HCT116 (cell line): ENCODE measurements at regions of chr4 and their contacts with region 1.

Region 1: GRCh38 chr4:161949946-161950725 is 213.7 kb downstream of the FSTL5 start:
- DNase-seq: no peak
- ATAC-seq: no peak
- H3K4me3 ChIP-seq: no peak overlapping the region
- H3K27ac ChIP-seq: no peak overlapping the region
- H3K4me1 ChIP-seq: no peaks in the 10 kb centered on the region
- H3K27me3 ChIP-seq: no peaks in the 10 kb centered on the region
- CTCF ChIP-seq: no peak
- POLR2A ChIP-seq: no peak
- RAD21 ChIP-seq: no peak

Region 2: DNA sequence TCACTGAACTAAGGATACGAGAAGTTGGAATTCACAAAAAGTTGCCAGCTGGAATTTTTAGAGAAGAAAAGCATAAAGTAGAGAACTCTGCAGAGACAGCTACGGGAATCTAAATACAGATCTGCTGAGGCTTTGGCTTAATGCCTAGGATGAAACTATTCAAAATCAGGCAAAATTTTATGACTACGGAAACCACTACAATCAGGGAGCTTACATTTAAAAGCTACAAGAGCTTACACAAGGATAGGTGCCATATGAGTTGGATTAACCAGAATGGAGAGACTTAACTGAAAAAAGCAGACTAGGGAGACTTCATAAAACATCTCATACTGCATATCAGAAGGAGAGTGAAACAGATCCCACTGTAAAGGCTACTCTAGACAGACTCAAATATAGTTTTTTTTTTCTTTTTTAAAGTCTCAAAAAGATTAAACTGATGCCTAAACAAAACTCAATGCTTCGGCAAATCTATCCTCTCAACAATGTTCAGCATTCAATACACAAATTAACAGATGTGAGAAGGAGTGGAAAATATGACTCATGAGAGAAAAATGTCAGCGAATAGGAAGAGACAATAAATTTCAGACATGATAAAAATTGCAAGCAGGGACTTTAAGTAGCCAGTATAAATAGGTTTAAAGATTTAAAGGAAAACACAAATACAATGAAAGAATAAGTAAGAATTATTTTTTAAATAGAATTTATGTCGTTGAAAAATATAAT is 372.4 kb before region 1 on chr4:
- CTCF ChIA-PET with region 1: no interaction called
- POLR2A ChIA-PET with region 1: no interaction called
- RAD21 ChIA-PET with region 1: no interaction called
- intact Hi-C with region 1: loop called (anchors 10 kb)
- DNase-seq: no peak
- ATAC-seq: no peak
- H3K4me3 ChIP-seq: no peak overlapping the region
- H3K27ac ChIP-seq: no peak overlapping the region
- H3K4me1 ChIP-seq: peaks cover 4 to 17% of the 10 kb centered on the region in 2 experiments; a peak in 3 of 4 replicates
- H3K27me3 ChIP-seq: no peaks in the 10 kb centered on the region
- CTCF ChIP-seq: no peak
- POLR2A ChIP-seq: no peak
- RAD21 ChIP-seq: no peak

Region 3: GRCh38 chr4:161936625-161937133 is 13.5 kb before region 1 on chr4:
- CTCF ChIA-PET with region 1: no interaction called
- POLR2A ChIA-PET with region 1: no interaction called
- RAD21 ChIA-PET with region 1: no interaction called
- intact Hi-C with region 1: no loop called
- DNase-seq: peak; percentile 86
- ATAC-seq: peak; percentile 94
- H3K4me3 ChIP-seq: no peak overlapping the region
- H3K27ac ChIP-seq: peak overlapping the region; percentile 82; the same call in 1 of the 2 replicates
- H3K4me1 ChIP-seq: peaks cover 22 to 33% of the 10 kb centered on the region in 2 experiments
- H3K27me3 ChIP-seq: no peaks in the 10 kb centered on the region
- CTCF ChIP-seq: no peak
- POLR2A ChIP-seq: no peak
- RAD21 ChIP-seq: no peak; the same call in 1 of the 2 replicates

Region 4: DNA sequence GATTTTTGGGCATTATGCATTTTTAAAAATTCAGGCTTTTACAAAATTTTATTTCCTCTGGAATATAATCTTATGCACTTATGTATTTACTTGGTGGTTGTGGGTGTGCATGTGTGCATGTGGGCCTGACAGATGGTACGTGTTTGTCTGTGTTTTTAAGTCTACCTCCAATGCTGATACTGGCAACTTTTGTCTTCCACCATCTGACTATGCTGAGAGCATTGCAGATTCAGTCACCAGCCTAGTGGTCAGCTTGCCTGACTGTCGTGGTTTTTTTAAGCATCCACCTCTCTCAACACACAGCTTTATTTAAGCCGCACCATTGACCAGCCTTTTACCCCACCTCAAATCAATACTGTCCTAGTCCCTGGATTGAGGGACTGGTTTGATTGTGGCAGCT is 176.6 kb after region 1 on chr4:
- CTCF ChIA-PET with region 1: no interaction called
- POLR2A ChIA-PET with region 1: no interaction called
- RAD21 ChIA-PET with region 1: no interaction called
- intact Hi-C with region 1: no loop called
- DNase-seq: no peak
- ATAC-seq: no peak
- H3K4me3 ChIP-seq: no peak overlapping the region
- H3K27ac ChIP-seq: no peak overlapping the region
- H3K4me1 ChIP-seq: no peaks in the 10 kb centered on the region
- H3K27me3 ChIP-seq: no peaks in the 10 kb centered on the region
- CTCF ChIP-seq: no peak
- POLR2A ChIP-seq: no peak
- RAD21 ChIP-seq: no peak